ENCODE measurements at regions of chr19 and their contacts with region 1.

Region 1: DNA sequence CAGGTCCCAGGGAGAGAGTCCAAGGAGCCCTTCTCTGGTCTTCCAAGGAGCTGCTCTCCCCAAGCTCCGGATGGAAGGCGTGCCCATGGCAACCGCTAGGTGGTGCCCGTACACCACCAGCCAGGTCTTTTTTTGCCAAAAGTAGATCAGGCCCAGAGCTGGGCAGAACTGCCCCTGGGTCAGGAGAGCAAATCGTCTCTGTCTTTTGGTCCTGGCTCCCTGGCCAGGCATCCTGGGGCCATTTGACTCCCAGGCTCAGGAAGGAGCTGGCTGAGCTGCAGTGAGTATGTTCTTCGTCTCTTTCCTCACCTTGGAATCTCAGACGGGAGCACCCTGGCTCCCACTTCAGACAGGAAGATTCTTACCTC is 24.6 kb upstream of the BCL3 start:
- DNase-seq: peak; percentile 54
- ATAC-seq: peak; percentile 91
- H3K4me3 ChIP-seq: no peak overlapping the region
- H3K27ac ChIP-seq: peak overlapping the region; percentile 6; the same call in 1 of the 2 replicates
- H3K4me1 ChIP-seq: peaks cover 50% of the 10 kb centered on the region
- H3K27me3 ChIP-seq: no peaks in the 10 kb centered on the region
- CTCF ChIP-seq: peak; percentile 97 to 99 (median 98); a peak in 5 of 6 replicates
- EP300 ChIP-seq: no peak
- POLR2A ChIP-seq: no peak
- RAD21 ChIP-seq: peak; percentile 97

Region 2: GRCh38 chr19:44576843-44577565 is 146.9 kb before region 1 on chr19:
- CTCF ChIA-PET with region 1: no interaction called
- POLR2A ChIA-PET with region 1: no interaction called
- RAD21 ChIA-PET with region 1: no interaction called
- SMC1A ChIA-PET with region 1: no interaction called
- in situ Hi-C with region 1: no loop called
- intact Hi-C with region 1: no loop called
- DNase-seq: no peak
- ATAC-seq: peak; percentile 52; the same call in 2 of the 3 replicates
- H3K4me3 ChIP-seq: no peak overlapping the region
- H3K27ac ChIP-seq: no peak overlapping the region
- H3K4me1 ChIP-seq: no peaks in the 10 kb centered on the region
- H3K27me3 ChIP-seq: no peaks in the 10 kb centered on the region; a peak in 1 of 4 replicates
- CTCF ChIP-seq: peak; percentile 35 to 53 (median 38); a peak in 5 of 6 replicates
- EP300 ChIP-seq: no peak
- POLR2A ChIP-seq: no peak
- RAD21 ChIP-seq: 0 out of 2 replicates have a peak, but pooled peaks have one; percentile 42

Region 3: DNA sequence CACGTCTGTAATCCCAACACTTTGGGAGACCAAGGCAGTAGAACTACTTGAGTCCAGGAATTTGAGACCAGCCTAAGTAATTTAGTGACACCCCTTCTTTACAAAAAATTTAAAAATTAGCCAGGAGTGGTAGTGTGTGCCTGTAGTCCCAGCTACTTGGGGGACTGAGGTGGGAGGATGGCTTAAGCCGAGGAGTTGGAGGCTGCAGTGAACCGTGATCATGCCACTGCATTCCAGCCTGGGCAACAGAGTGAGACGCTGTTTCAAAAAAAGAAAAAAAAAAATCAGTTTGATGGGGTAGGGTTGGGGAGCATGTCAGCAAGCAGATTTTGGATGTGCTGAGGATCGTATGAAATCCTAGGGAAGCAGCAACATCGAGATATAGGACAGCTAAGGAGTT is 48.4 kb before region 1 on chr19:
- CTCF ChIA-PET with region 1: no interaction called
- POLR2A ChIA-PET with region 1: no interaction called
- RAD21 ChIA-PET with region 1: no interaction called
- SMC1A ChIA-PET with region 1: no interaction called
- in situ Hi-C with region 1: no loop called
- intact Hi-C with region 1: no loop called
- DNase-seq: no peak
- ATAC-seq: no peak
- H3K4me3 ChIP-seq: no peak overlapping the region
- H3K27ac ChIP-seq: no peak overlapping the region
- H3K4me1 ChIP-seq: no peaks in the 10 kb centered on the region
- H3K27me3 ChIP-seq: no peaks in the 10 kb centered on the region
- CTCF ChIP-seq: no peak
- EP300 ChIP-seq: no peak
- POLR2A ChIP-seq: no peak
- RAD21 ChIP-seq: no peak

Region 4: DNA sequence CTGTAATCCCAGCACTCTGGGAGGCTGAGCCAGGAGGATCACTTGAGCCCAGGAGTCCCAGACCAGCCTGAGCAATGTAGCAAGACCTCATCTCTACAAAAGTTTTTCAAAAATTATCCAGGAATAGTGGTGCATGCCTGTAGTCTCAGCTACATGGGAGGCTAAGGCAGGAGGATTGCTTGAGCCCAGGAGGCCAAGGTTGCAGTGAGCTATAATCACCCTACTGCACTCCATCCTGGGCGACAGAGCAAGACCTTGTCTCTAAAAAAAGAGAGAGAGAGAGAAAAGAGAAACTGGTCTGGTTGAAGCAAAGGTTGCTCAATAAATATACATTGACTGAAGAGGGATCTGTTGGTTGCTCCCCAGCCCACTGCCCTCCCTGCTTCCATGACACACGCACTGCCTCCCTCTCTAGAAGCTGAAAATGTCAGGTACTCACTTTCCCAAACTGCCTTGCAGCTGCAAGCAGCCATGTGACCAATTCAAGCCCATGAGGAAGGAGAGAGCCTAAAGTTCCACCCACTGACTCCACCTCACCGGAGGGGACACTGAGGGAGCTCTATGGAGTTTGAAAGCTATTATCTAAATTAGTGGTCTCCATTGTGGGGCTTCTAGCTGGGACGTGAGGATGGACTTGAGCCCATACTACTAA is 10.9 kb before region 1 on chr19:
- CTCF ChIA-PET with region 1: interaction called, 22 read pairs
- POLR2A ChIA-PET with region 1: interaction called, 3 read pairs
- RAD21 ChIA-PET with region 1: interaction called, 7 read pairs
- SMC1A ChIA-PET with region 1: interaction called, 8 read pairs
- in situ Hi-C with region 1: no loop called
- intact Hi-C with region 1: no loop called
- DNase-seq: no peak
- ATAC-seq: no peak
- H3K4me3 ChIP-seq: no peak overlapping the region
- H3K27ac ChIP-seq: no peak overlapping the region
- H3K4me1 ChIP-seq: no peaks in the 10 kb centered on the region; the same call in 1 of the 2 replicates
- H3K27me3 ChIP-seq: no peaks in the 10 kb centered on the region
- CTCF ChIP-seq: no peak
- EP300 ChIP-seq: no peak
- POLR2A ChIP-seq: no peak
- RAD21 ChIP-seq: no peak

Region 5: DNA sequence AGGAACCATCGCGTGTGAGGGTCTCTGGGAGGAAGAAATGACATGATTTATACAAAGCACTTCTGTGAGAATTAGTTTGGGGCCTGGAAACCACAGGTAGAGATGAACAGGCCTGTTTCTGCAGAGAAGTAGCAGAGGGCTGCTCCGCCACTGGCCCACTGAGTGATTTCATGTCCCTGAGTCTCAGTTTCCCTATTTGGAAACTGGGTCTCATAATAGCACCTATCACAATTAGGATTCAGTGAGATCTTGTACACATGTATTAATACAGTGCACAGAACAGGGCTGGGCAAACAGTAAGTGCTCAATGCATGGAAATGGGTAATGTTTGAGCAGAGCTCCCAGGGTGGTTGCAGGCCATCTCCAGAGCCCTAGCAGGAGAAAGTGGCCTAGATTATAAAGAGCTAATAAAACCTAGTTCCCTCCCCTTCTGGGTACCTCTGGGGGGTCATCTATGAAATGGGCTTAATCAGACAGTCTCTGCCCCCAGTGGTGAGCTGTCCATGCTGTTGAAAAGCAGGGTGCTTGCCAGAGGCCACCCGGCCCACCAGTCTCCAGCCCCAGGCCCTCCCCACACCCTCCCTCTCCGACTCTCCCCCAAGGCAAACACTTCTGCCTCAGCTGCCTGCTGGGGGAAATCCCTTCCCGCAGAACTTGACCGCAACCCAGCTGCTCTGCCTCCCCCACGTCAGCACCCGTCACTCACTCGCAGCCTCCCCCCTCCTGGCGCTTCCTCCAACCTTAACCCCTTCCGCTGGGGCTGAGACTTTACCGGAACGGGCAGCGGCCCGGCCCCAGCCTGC is 29.1 kb after region 1 on chr19:
- CTCF ChIA-PET with region 1: interaction called, 109 read pairs
- POLR2A ChIA-PET with region 1: interaction called, 32 read pairs
- RAD21 ChIA-PET with region 1: interaction called, 50 read pairs
- SMC1A ChIA-PET with region 1: interaction called, 115 read pairs
- in situ Hi-C with region 1: no loop called
- intact Hi-C with region 1: loop called (anchors 1 kb)
- DNase-seq: peak; percentile 94
- ATAC-seq: peak; percentile 81
- H3K4me3 ChIP-seq: peak overlapping the region; percentile 98
- H3K27ac ChIP-seq: peak overlapping the region; percentile 95
- H3K4me1 ChIP-seq: peaks cover 34% of the 10 kb centered on the region
- H3K27me3 ChIP-seq: no peaks in the 10 kb centered on the region
- CTCF ChIP-seq: peak in 1 of 3 experiments; percentile 11; a peak in 1 of 6 replicates
- EP300 ChIP-seq: peak; percentile 98 to 99
- POLR2A ChIP-seq: peak; percentile 81
- RAD21 ChIP-seq: no peak

Region 6: GRCh38 chr19:44782729-44783128 is 58.8 kb after region 1 on chr19:
- CTCF ChIA-PET with region 1: interaction called, 36 read pairs
- POLR2A ChIA-PET with region 1: interaction called, 3 read pairs
- RAD21 ChIA-PET with region 1: interaction called, 14 read pairs
- SMC1A ChIA-PET with region 1: interaction called, 23 read pairs
- in situ Hi-C with region 1: no loop called
- intact Hi-C with region 1: no loop called
- DNase-seq: no peak
- ATAC-seq: no peak
- H3K4me3 ChIP-seq: no peak overlapping the region
- H3K27ac ChIP-seq: no peak overlapping the region
- H3K4me1 ChIP-seq: no peaks in the 10 kb centered on the region; the same call in 1 of the 2 replicates
- H3K27me3 ChIP-seq: no peaks in the 10 kb centered on the region
- CTCF ChIP-seq: no peak
- EP300 ChIP-seq: no peak
- POLR2A ChIP-seq: no peak
- RAD21 ChIP-seq: no peak

Region 7: DNA sequence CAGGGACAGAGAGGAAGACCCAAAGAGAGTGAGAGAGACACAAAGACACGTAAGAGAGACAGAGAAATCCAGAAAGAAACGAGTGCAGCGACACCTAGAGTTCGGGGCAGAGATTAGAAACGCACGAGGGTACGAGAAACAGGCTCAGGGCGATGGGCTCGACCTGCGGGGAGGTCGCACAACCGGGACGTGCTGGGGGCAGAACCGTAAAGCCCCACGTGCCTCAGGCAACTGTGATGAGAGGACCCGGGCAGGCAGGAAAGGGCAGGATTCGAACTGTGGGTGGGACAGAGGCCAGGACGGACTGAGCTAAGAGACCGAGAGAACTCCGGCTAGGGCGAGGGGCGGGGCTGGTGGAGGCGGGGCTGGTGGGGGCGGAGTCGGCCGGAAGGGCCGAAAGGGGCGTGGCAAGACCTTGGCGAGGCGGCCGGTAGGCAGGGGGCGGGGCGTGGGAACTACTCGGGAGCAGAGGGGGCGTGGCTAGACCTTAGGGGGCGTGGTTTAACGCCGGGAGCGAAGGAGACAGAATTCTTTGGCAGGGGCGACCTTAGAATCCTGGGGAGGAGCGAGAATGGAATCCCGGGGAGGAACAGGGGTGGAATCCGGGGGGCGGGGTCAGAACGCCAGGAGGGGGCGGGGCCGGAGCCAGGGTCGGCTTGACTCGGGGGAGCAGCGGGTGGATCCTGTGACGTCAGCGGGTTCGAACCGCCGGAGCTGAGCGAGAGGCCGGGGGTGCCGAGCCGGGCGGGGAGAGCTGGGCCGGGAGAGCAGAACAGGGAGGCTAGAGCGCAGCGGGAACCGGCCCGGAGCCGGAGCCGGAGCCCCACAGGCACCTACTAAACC is 121.9 kb after region 1 on chr19 and contains the start of gene NECTIN2:
- CTCF ChIA-PET with region 1: interaction called, 17 read pairs
- POLR2A ChIA-PET with region 1: no interaction called
- RAD21 ChIA-PET with region 1: interaction called, 4 read pairs
- SMC1A ChIA-PET with region 1: interaction called, 7 read pairs
- in situ Hi-C with region 1: no loop called
- intact Hi-C with region 1: no loop called
- DNase-seq: peak; percentile 37
- ATAC-seq: peak; percentile 85
- H3K4me3 ChIP-seq: peak within 1 kb of the TSS; percentile 59; the same call in 1 of the 2 replicates
- H3K27ac ChIP-seq: no peak within 1 kb of the TSS
- H3K4me1 ChIP-seq: peaks cover 8% of the 10 kb centered on the region
- H3K27me3 ChIP-seq: peaks cover 9 to 11% of the 10 kb centered on the region in 2 experiments
- CTCF ChIP-seq: peak; percentile 47 to 75 (median 60)
- EP300 ChIP-seq: no peak
- POLR2A ChIP-seq: no peak
- RAD21 ChIP-seq: 0 out of 2 replicates have a peak, but pooled peaks have one; percentile 21
- polyA plus RNA-seq, gene NECTIN2: not detected